Vagina (tissue), 2 donors: ENCODE measurements at regions of chr9 and their contacts with region 1.

Region 1: DNA sequence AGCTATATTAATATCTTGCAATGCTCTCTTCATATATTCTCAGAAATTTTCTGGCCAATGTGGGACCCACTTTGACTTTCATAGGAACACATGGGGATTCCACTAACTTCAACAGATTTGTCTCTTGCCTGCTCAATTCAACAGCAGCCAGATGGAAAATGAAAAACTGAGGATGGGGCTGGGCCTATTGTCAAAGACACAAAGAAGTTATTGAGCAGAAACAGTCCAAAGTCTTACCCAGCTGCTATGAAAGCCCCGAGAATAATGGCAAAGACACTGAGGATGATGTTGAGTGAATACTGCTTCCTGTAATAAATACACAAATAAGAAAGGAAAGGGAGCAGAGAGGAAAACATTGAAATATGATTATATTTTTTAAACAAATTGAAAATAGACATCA is 32.6 kb downstream of the SLC35D2 start:
- DNase-seq: no peak
- H3K4me3 ChIP-seq: no peak overlapping the region
- H3K27ac ChIP-seq: no peak overlapping the region
- H3K4me1 ChIP-seq: no peaks in the 10 kb centered on the region
- H3K27me3 ChIP-seq: no peaks in the 10 kb centered on the region
- CTCF ChIP-seq: no peak
- POLR2A ChIP-seq: no peak

Region 2: GRCh38 chr9:96177005-96177718 is 173.7 kb before region 1 on chr9:
- intact Hi-C with region 1: no loop called
- DNase-seq: no peak
- H3K4me3 ChIP-seq: no peak overlapping the region
- H3K27ac ChIP-seq: no peak overlapping the region
- H3K4me1 ChIP-seq: no peaks in the 10 kb centered on the region
- H3K27me3 ChIP-seq: no peaks in the 10 kb centered on the region
- CTCF ChIP-seq: no peak
- POLR2A ChIP-seq: no peak

Region 3: DNA sequence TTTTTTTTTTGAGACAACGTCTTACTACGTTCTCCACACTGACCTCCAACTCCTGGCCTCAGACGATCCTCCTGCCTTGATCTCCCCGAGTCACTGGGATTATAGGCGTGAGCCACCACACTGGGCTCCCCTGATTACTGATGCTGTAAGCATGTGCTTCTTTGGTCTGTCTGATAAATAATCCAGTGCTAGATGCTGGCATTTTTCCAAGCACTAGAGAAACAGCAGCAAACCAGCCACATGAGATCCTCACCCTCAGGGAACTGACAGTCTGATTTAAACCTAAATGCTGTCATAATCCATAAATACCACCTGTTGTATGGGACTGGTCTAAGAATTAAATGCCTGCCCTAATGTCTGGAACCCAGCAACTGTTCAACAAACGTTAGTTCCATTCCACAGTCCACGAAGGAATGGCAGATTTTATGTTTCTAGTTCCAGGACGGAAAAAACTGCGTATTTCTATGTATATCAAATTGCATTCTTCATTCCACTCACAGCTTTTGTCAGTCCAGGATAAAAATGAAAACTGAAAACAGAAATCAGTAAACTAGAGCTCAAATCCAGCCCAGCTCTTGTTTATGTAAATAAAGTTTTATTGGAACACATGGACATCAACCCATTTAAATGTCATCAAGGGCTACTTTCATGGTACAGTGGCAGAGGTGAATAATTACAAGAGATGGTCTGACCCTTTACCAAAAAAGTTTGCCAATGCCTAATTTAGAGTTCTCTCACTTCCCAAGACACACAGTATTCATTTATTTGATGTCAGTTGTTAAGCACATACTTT is 12.5 kb after region 1 on chr9:
- intact Hi-C with region 1: loop called (anchors 1 kb)
- DNase-seq: no peak
- H3K4me3 ChIP-seq: no peak overlapping the region
- H3K27ac ChIP-seq: no peak overlapping the region
- H3K4me1 ChIP-seq: no peaks in the 10 kb centered on the region
- H3K27me3 ChIP-seq: no peaks in the 10 kb centered on the region
- CTCF ChIP-seq: no peak
- POLR2A ChIP-seq: no peak

Region 4: GRCh38 chr9:96515621-96516470 is 165.0 kb after region 1 on chr9:
- intact Hi-C with region 1: no loop called
- DNase-seq: no peak
- H3K4me3 ChIP-seq: no peak overlapping the region
- H3K27ac ChIP-seq: peak overlapping the region; percentile 69
- H3K4me1 ChIP-seq: peaks cover 26% of the 10 kb centered on the region
- H3K27me3 ChIP-seq: no peaks in the 10 kb centered on the region
- CTCF ChIP-seq: no peak
- POLR2A ChIP-seq: no peak